ENCODE measurements at regions of chr7 and their contacts with region 1.

Region 1: DNA sequence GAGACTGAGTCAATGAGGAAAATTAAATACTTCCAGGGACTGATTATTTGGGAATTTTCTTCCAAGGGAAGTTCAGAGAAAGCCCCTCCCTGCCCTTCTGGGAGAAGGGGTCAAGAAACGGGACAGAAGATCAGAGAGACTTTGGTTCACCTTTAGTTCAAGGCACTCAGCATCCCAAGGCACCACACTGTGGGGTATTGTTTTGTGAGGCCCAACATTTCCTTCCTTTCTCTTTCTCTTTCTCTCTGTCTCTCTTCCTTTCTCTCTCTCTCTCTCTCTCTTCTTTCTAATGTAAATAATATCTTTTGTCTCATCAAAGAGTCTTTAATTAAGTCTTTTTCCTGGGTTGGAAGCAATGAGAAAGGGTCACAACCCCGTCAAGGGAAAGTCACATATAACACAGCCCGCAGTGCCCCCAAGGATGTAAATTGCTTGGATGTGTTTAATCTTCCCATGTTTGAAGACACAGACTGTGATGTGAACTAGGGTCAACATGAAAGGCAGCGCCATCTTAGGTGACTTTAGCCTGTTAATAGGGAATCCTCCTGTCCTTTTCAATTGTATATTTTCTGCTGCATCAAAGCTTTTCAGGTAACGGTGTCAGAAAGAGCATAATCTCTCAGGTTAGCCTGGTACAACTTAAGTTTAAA is 983.3 kb upstream of the C7orf33 start:
- DNase-seq: no peak
- H3K4me3 ChIP-seq: no peak overlapping the region
- H3K27ac ChIP-seq: no peak overlapping the region
- H3K4me1 ChIP-seq: no peaks in the 10 kb centered on the region
- H3K27me3 ChIP-seq: no peaks in the 10 kb centered on the region
- CTCF ChIP-seq: no peak

Region 2: DNA sequence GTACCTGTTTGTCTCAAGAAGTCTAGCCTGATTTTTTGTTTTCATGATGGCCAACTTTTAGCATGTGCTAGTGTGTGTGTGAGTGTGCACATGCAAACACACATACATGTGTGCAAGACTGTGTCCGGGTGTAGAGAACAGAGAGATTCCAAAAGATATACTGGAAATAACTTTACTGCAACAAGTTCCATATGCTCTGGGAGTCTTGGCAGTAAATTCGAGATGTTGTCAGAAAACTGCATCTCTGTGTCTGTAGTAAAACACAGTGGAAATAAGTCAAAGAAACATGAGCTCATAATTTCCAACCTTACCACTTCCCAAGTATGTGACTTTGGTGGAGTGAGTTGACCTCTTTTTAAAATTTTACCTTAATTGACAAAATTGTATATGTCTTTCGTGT is 32.5 kb after region 1 on chr7:
- CTCF ChIA-PET with region 1: no interaction called
- dilution Hi-C with region 1: loop called (anchors 5 kb)
- in situ Hi-C with region 1: no loop called
- intact Hi-C with region 1: no loop called
- DNase-seq: no peak
- H3K4me3 ChIP-seq: no peak overlapping the region
- H3K27ac ChIP-seq: no peak overlapping the region
- H3K4me1 ChIP-seq: no peaks in the 10 kb centered on the region
- H3K27me3 ChIP-seq: no peaks in the 10 kb centered on the region
- CTCF ChIP-seq: no peak